ENCODE measurements at regions of chr15 and their contacts with region 1.

Region 1: GRCh38 chr15:100873029-100873677 is 6.5 kb upstream of the ALDH1A3 start:
- DNase-seq: peak; percentile 73
- H3K4me3 ChIP-seq: no peak overlapping the region
- CTCF ChIP-seq: peak; percentile 78

Region 2: DNA sequence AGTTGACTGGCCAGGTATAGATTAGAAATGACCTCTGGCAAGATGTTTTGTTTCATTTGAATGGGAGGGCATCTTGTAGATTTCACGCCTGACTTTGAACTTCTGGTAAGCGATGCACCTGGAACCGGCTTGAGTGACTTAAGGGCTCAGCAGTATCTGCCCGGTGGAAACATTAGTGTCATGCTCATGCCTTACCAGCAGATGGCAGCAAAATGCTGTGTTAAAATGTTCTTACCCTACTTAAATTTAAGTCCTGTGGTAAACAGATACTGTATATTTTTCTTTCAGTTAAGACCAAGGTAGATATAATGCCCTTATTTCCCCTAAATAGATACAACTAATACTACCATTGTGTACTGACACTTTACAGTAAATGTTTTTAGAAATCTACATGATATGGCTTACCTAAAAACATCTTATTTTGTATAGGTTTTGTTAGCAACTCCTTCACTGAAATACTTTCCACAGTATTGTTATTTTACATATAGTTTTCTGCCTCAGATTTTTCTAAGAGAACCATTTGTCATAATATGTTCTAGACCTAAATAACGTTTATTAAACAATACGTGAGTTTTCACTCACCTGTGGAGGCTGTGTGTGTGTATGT is 245.3 kb before region 1 on chr15:
- CTCF ChIA-PET with region 1: interaction called, 29 read pairs
- POLR2A ChIA-PET with region 1: no interaction called
- DNase-seq: peak; percentile 52
- H3K4me3 ChIP-seq: no peak overlapping the region
- CTCF ChIP-seq: peak; percentile 58

Region 3: DNA sequence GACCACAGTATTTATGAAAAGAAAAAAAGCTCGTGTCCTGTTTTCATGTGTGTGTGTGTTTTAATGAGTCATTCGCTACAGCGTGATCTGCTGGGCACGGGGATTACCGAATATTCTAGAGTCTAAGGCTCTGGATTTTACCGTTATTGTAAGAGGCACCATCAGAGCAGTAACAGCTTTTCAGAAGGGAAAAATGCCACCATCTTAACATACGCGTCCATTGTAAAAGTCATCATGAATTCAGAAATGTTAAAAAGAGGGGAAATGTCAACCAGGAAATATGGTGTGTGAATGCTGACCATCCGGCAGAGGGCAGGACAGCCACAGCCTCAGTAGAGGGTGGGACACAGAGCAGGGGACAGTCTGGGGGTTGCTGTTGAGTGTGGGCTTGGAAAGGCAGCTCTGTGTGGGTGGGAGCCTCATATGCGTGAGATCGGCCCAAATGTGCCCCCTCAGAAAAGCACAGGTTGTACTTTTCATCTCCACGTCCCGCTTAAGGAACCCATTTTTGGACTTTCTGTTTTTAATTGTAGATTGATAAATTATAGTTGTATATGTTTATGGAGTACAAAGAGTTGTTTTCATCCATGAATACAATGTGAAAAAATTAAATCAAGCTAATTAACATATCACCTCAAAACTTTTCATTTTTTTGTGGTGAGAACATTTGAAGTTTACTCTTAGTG is 201.2 kb before region 1 on chr15:
- CTCF ChIA-PET with region 1: interaction called, 47 read pairs
- POLR2A ChIA-PET with region 1: no interaction called
- DNase-seq: no peak
- H3K4me3 ChIP-seq: no peak overlapping the region
- CTCF ChIP-seq: peak; percentile 64

Region 4: DNA sequence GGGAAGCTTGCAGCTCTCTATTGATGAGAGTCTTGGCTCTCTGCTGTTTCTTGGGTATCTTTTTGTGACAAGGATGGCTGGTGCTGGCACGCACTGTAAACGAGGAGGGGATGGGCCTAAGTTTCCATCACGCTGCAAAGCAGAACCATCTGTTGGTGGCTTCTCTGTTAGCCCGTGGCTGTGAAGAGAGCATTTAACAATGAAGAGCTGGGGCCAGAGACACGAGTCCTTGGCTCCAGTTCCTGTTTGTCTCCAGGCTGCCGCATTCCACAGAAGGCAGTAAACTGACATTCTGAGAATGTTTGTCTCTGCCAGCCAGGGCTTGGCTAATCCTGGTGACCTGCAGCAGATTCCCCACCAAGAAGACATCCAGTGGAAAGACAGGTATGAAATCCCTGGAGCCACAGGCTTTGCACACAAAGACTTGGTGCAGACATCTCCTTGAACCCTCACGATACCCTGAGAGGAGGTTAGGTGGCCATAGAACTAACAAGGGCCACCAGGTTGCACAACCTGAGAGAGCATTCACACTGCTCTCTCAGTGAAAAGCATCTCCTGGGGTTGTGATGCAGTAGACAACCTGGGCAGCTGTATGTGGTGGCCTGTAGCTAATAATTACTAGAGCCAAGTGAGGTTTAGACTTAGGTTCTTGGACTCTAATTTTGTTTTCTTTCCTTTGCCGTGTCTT is 139.9 kb before region 1 on chr15:
- CTCF ChIA-PET with region 1: interaction called, 10 read pairs
- POLR2A ChIA-PET with region 1: interaction called, 3 read pairs
- DNase-seq: peak; percentile 33
- H3K4me3 ChIP-seq: no peak overlapping the region
- CTCF ChIP-seq: no peak

Region 5: GRCh38 chr15:100889385-100890050 is 16.4 kb after region 1 on chr15:
- CTCF ChIA-PET with region 1: interaction called, 15 read pairs
- POLR2A ChIA-PET with region 1: no interaction called
- DNase-seq: peak; percentile 52
- H3K4me3 ChIP-seq: peak overlapping the region; percentile 6
- CTCF ChIP-seq: no peak

Region 6: DNA sequence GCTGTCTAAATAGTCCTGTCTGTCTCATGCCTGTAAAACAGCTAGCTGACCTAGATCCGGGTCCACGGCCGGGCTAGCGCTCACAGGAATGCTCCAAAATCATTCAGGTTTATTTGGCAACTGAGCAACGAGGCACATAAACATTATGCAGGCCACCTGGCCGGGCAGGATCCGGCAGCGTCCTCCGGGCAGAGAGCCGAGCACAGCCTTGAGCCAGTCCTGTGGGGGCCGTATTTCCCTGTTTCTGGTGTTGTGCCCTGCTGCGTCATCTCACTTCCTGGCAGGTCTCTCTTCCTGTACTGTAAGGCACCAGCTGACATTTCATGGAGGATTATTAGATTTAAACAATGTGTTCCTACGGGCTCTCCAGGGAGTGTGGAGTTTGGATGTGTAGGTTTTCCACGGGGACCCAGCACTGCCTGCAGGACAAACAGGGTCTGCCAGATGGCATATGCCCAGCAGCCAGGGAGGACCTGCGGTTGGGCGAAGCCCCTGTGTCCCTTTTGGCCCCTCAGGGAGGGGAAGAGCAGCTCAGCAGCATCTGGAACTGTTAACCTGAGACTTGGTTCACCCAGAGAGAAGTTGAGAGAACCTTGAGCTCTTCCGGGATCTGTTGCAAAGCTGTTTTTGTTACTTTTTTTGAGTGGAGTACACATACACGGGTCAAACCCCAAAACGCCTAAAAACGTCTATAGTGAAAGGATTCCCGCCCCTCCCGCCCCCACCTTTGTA is 29.4 kb after region 1 on chr15:
- CTCF ChIA-PET with region 1: interaction called, 12 read pairs
- POLR2A ChIA-PET with region 1: no interaction called
- DNase-seq: peak; percentile 37
- H3K4me3 ChIP-seq: no peak overlapping the region; the same call in 1 of the 2 replicates
- CTCF ChIP-seq: no peak

Measured in AG04449 (cell line).